Mammary epithelial cell (primary cell): ENCODE measurements at regions of chr16 and their contacts with region 1.

Region 1: GRCh38 chr16:84062734-84063640 is 20.4 kb upstream of the SLC38A8 start:
- DNase-seq: peak; percentile 64
- H3K4me3 ChIP-seq: no peak overlapping the region
- H3K27ac ChIP-seq: no peak overlapping the region
- H3K4me1 ChIP-seq: no peaks in the 10 kb centered on the region
- H3K27me3 ChIP-seq: no peaks in the 10 kb centered on the region
- CTCF ChIP-seq: peak; percentile 88 to 91

Region 2: GRCh38 chr16:83926726-83927397 is 136.1 kb before region 1 on chr16:
- CTCF ChIA-PET with region 1: interaction called, 7 read pairs
- dilution Hi-C with region 1: no loop called
- in situ Hi-C with region 1: no loop called
- intact Hi-C with region 1: loop called (anchors 1 kb)
- DNase-seq: peak; percentile 81
- H3K4me3 ChIP-seq: peak overlapping the region; percentile 15 to 44 (median 43)
- H3K27ac ChIP-seq: peak overlapping the region; percentile 51
- H3K4me1 ChIP-seq: peaks cover 26% of the 10 kb centered on the region
- H3K27me3 ChIP-seq: no peaks in the 10 kb centered on the region
- CTCF ChIP-seq: peak; percentile 83 to 98

Region 3: GRCh38 chr16:83952940-83953795 is 109.8 kb before region 1 on chr16 and contains the start of gene OSGIN1:
- CTCF ChIA-PET with region 1: interaction called, 5 read pairs
- dilution Hi-C with region 1: no loop called
- in situ Hi-C with region 1: loop called in 1 of 2 experiments (anchors 5 kb)
- intact Hi-C with region 1: loop called (anchors 1 kb)
- DNase-seq: peak; percentile 92
- H3K4me3 ChIP-seq: peak within 1 kb of the TSS; percentile 65 to 76 (median 66)
- H3K27ac ChIP-seq: peak within 1 kb of the TSS; percentile 82
- H3K4me1 ChIP-seq: peaks cover 21% of the 10 kb centered on the region
- H3K27me3 ChIP-seq: no peaks in the 10 kb centered on the region
- CTCF ChIP-seq: no peak
- total RNA-seq, gene OSGIN1: 3.3 to 9.3 TPM

Region 4: GRCh38 chr16:83967806-83968305 is 95.1 kb before region 1 on chr16 and contains the start of gene NECAB2:
- CTCF ChIA-PET with region 1: no interaction called
- dilution Hi-C with region 1: no loop called
- in situ Hi-C with region 1: loop called in 1 of 2 experiments (anchors 5 kb)
- intact Hi-C with region 1: loop called (anchors 1 kb)
- DNase-seq: no peak
- H3K4me3 ChIP-seq: peak within 1 kb of the TSS in 2 of 3 experiments; percentile 6 to 34
- H3K27ac ChIP-seq: no peak within 1 kb of the TSS
- H3K4me1 ChIP-seq: no peaks in the 10 kb centered on the region
- H3K27me3 ChIP-seq: peaks cover 6% of the 10 kb centered on the region
- CTCF ChIP-seq: peak; percentile 20 to 60
- total RNA-seq, gene NECAB2: 0.87 TPM in 1 of 2 donors, not detected in the other

Region 5: DNA sequence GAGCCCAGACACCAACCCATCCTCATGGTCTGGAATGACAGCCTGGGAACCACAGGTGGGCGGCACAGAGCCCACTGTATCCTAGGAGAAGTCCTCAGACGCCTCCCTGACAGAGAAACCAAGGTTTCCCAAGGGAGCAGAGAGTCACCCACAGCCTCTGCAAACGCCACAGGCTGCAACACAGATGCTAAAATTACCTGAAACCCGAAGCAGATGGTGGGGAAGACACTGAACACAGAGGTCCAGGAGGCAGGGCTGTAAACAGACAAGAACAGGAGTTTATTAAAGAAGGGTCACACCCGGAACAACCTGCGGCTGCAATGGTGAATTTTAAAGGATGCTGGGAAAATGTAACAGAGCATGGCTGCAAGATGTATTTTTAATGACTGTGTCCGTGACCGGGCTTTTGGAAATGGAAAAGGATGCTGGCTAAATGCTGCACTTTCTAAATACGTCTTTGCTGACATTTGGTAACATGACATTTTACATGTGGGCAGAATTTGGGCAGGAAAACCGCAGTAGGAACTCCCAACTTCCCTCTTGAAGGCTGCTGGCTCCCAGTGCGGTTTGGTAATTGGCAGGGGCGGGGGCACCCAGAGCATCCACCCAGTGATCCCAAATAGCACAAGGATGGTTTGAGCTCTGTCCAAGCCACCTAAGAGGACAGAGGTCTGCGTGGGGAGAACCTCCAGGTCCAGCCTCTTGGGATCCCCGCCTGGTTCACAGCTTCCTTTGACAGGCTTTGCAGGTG is 33.5 kb before region 1 on chr16:
- CTCF ChIA-PET with region 1: no interaction called
- dilution Hi-C with region 1: loop called (anchors 5 kb)
- in situ Hi-C with region 1: no loop called
- intact Hi-C with region 1: no loop called
- DNase-seq: no peak
- H3K4me3 ChIP-seq: no peak overlapping the region
- H3K27ac ChIP-seq: no peak overlapping the region
- H3K4me1 ChIP-seq: no peaks in the 10 kb centered on the region
- H3K27me3 ChIP-seq: no peaks in the 10 kb centered on the region
- CTCF ChIP-seq: no peak

Region 6: GRCh38 chr16:84806256-84806889 is 743.4 kb after region 1 on chr16:
- CTCF ChIA-PET with region 1: no interaction called
- dilution Hi-C with region 1: no loop called
- in situ Hi-C with region 1: no loop called
- intact Hi-C with region 1: no loop called
- DNase-seq: no peak
- H3K4me3 ChIP-seq: no peak overlapping the region
- H3K27ac ChIP-seq: no peak overlapping the region
- H3K4me1 ChIP-seq: peaks cover 12% of the 10 kb centered on the region
- H3K27me3 ChIP-seq: peaks cover 2% of the 10 kb centered on the region
- CTCF ChIP-seq: no peak